SK-N-SH (cell line): ENCODE measurements at regions of chr7 and their contacts with region 1.

Region 1: DNA sequence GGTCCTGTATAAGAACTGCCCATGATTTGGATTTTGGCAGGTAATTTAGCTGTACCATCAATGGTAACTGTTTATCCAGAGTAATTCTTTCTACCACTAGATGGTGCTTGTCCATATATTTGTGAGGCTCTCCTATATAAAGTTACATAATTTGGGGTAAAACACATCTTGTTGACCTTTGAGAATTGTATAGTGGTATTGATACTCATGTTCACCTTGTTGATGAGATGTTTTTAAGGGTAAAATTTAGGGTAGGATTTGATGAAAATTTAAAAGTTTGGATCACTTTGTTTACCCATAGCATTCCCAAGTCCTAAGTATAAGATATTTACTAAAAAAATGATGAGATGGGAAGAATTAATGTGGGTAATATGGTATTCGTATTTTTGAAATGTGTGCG is 31.6 kb downstream of the ST7 start:
- DNase-seq: peak; percentile 52
- H3K4me3 ChIP-seq: no peak overlapping the region
- H3K27ac ChIP-seq: no peak overlapping the region
- H3K4me1 ChIP-seq: peaks cover 0 to 8% of the 10 kb centered on the region in 2 experiments; a peak in 1 of 4 replicates
- H3K27me3 ChIP-seq: no peaks in the 10 kb centered on the region
- CTCF ChIP-seq: peak; percentile 98
- EP300 ChIP-seq: no peak
- RAD21 ChIP-seq: peak; percentile 74

Region 2: GRCh38 chr7:116548506-116548905 is 436.4 kb before region 1 on chr7:
- CTCF ChIA-PET with region 1: no interaction called
- POLR2A ChIA-PET with region 1: no interaction called
- DNase-seq: no peak
- H3K4me3 ChIP-seq: no peak overlapping the region
- H3K27ac ChIP-seq: peak overlapping the region in 1 of 2 experiments; percentile 79; a peak in 1 of 4 replicates
- H3K4me1 ChIP-seq: peaks cover 0 to 82% of the 10 kb centered on the region in 2 experiments; a peak in 3 of 4 replicates
- H3K27me3 ChIP-seq: no peaks in the 10 kb centered on the region
- CTCF ChIP-seq: no peak
- EP300 ChIP-seq: no peak
- RAD21 ChIP-seq: no peak

Region 3: DNA sequence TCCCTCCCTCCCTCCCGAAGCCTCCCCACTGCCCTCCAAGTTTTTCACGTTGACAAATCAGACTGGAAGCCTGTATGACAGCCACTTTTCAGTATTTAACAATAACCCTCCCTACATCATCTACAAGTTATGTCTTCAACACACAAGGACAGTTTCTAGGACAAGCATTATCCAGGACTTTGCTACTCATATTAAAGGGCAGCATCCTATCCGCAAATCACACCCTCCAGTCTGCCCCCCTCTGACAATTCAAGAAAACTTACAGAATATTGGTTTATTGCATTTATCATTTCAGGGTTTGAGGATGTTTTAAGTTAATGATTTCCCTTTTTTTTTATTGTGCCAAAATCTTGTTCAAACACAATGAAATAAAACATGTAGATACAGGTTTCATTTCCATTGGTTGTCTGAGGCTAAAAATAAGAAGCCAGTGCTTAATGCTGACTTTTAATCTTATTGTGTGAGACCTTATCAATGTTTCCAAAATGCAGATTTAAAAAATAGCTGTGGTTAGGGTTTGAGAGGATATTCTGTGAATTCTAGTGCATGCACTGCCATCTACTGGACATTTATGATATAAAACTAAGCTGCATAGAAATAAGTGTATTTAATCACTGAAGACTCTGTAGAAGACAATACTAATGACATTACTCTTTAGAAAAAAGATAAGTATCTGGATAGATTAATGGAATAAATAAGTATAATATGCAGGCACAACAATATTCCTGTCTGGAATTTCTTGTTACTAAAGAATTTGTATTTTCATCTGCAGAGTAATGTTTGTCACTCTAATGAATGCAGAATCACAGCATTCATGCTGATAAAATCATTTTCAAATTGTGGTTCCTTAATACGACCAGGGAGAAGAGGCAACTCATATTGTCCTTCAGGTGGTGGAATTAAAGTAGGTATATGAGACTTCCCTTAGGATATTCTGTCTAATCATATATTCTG is 396.0 kb before region 1 on chr7:
- CTCF ChIA-PET with region 1: no interaction called
- POLR2A ChIA-PET with region 1: no interaction called
- DNase-seq: peak; percentile 21
- H3K4me3 ChIP-seq: no peak overlapping the region; a peak in 1 of 4 replicates
- H3K27ac ChIP-seq: peak overlapping the region; percentile 7 to 76; a peak in 3 of 4 replicates
- H3K4me1 ChIP-seq: peaks cover 5 to 19% of the 10 kb centered on the region in 2 experiments; a peak in 3 of 4 replicates
- H3K27me3 ChIP-seq: no peaks in the 10 kb centered on the region; the same call in 1 of the 2 replicates
- CTCF ChIP-seq: peak; percentile 93
- EP300 ChIP-seq: 0 out of 4 replicates have a peak, but pooled peaks of 1 of the 2 experiments have one; percentile 1
- RAD21 ChIP-seq: peak; percentile 88

Region 4: GRCh38 chr7:116929914-116930913 is 54.7 kb before region 1 on chr7:
- CTCF ChIA-PET with region 1: interaction called, 87 read pairs
- POLR2A ChIA-PET with region 1: no interaction called
- DNase-seq: peak; percentile 80
- H3K4me3 ChIP-seq: no peak overlapping the region
- H3K27ac ChIP-seq: no peak overlapping the region
- H3K4me1 ChIP-seq: no peaks in the 10 kb centered on the region
- H3K27me3 ChIP-seq: no peaks in the 10 kb centered on the region
- CTCF ChIP-seq: peak; percentile 100
- EP300 ChIP-seq: no peak
- RAD21 ChIP-seq: peak; percentile 96

Region 5: GRCh38 chr7:116970238-116970910 is 14.5 kb before region 1 on chr7:
- CTCF ChIA-PET with region 1: interaction called, 57 read pairs
- POLR2A ChIA-PET with region 1: no interaction called
- DNase-seq: no peak
- H3K4me3 ChIP-seq: no peak overlapping the region
- H3K27ac ChIP-seq: no peak overlapping the region
- H3K4me1 ChIP-seq: peaks cover 0 to 6% of the 10 kb centered on the region in 2 experiments; a peak in 2 of 4 replicates
- H3K27me3 ChIP-seq: no peaks in the 10 kb centered on the region
- CTCF ChIP-seq: no peak
- EP300 ChIP-seq: no peak
- RAD21 ChIP-seq: no peak

Region 6: DNA sequence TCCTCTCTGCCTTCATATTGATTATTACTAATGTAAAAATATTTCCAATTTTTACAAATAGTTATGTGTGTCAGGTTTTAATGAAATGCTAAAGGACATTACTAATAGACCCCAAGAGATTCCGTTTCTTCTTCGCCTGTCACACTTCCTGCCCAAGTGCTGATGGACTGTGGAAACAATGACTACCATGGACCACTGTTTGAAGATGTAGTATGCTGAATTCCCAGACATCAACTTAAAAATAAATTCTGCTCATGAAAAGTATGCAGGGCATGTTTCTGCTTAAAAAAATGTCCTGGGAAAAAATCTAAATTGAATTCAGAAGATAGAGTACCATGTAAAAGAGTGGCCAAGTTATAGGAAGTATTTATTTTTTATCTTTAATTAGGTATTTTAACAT is 20.5 kb after region 1 on chr7:
- CTCF ChIA-PET with region 1: interaction called, 58 read pairs
- POLR2A ChIA-PET with region 1: no interaction called
- DNase-seq: no peak
- H3K4me3 ChIP-seq: no peak overlapping the region
- H3K27ac ChIP-seq: peak overlapping the region in 1 of 2 experiments; percentile 60; a peak in 3 of 4 replicates
- H3K4me1 ChIP-seq: peaks cover 0 to 2% of the 10 kb centered on the region in 2 experiments; a peak in 2 of 4 replicates
- H3K27me3 ChIP-seq: no peaks in the 10 kb centered on the region
- CTCF ChIP-seq: no peak
- EP300 ChIP-seq: no peak
- RAD21 ChIP-seq: no peak

Region 7: DNA sequence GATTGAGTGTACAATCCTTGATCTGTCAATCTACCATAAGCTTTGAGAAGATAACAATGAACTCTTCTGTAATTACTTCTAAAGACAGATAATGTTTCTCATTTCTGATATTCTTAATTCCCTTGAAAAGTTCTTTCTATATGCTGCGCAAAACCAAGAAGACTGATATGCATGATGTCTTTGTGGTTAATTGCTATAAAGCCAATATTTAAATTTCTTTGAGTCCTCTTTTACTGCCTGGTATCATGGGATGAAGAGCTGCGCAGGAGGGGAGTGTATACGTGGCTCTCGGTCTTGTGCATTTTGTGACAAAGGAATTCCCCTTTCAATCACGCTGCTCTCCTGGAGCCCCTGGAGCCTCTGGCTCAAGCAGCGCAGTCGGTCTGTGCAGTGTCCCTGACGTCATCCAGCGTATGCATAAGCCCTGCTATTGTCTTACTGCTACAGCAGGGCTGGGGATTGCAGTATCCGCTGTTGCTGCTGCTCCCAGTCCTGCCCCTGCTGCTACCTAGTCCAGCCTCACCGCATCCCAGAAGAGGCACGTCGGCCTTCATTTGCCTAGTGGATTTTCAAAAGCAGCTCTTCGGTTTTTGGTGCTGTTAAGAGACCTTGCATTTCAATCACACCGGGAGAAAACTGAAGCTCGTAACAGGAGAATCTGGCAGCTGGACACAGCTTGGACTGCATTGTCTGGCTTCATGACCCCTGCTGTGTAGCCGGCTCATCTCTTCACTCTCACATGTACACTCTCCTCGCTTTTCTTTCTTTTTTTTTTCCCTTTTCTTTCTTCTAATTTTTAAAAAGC is 35.1 kb after region 1 on chr7:
- CTCF ChIA-PET with region 1: interaction called, 58 read pairs
- POLR2A ChIA-PET with region 1: no interaction called
- DNase-seq: peak; percentile 78
- H3K4me3 ChIP-seq: peak overlapping the region; percentile 48 to 53
- H3K27ac ChIP-seq: peak overlapping the region; percentile 84 to 86
- H3K4me1 ChIP-seq: peaks cover 10 to 39% of the 10 kb centered on the region in 2 experiments; a peak in 3 of 4 replicates
- H3K27me3 ChIP-seq: no peaks in the 10 kb centered on the region
- CTCF ChIP-seq: no peak
- EP300 ChIP-seq: peak in 1 of 2 experiments; percentile 45; a peak in 1 of 4 replicates
- RAD21 ChIP-seq: 0 out of 2 replicates have a peak, but pooled peaks have one; percentile 18

Region 8: DNA sequence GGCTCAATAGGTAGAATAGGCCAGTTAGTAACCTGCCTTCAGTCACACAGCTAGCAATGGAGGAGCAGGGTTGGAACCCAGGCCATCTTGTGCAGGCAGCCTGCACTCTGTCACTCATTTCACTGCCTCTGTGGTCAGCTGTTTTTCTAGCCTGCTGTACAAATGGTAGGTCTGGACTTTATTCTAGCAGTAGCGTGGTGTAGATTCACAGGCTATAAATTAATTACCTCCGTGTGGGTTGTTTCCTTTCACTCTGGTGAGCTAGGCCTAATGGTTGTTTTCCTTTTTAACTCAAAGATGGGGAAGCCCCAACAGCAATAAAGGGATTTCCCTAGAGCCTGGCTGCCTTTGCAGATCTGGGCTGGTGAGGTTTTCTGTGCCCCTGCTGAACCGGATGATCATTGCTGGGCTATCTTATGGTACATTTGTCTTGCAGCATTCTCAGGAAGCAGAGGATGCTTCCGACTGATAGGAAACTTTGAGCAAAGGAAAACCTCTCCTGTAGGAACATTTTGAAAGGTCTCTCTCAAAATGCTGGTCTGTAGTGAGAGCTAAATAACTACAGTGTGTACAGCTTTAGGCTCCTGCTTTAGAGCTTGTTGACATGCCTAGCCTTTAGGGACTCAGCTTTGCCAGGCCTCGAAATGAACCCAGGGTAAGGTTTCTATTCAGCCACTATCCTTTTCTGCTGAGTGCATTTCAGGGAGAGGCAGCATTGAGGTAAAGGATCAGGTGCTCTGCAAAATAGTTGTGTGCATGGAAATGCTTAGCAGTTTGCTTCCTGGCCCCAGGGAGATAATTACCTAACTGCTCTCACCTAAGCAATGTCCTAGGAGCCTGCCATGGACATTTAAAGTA is 125.8 kb after region 1 on chr7:
- CTCF ChIA-PET with region 1: interaction called, 668 read pairs
- POLR2A ChIA-PET with region 1: no interaction called
- DNase-seq: peak; percentile 80
- H3K4me3 ChIP-seq: no peak overlapping the region; a peak in 1 of 4 replicates
- H3K27ac ChIP-seq: peak overlapping the region in 1 of 2 experiments; percentile 94; a peak in 3 of 4 replicates
- H3K4me1 ChIP-seq: peaks cover 5 to 24% of the 10 kb centered on the region in 2 experiments; a peak in 3 of 4 replicates
- H3K27me3 ChIP-seq: no peaks in the 10 kb centered on the region
- CTCF ChIP-seq: no peak
- EP300 ChIP-seq: peak in 1 of 2 experiments; percentile 91; a peak in 2 of 4 replicates
- RAD21 ChIP-seq: peak; percentile 27; the same call in 1 of the 2 replicates

Region 9: DNA sequence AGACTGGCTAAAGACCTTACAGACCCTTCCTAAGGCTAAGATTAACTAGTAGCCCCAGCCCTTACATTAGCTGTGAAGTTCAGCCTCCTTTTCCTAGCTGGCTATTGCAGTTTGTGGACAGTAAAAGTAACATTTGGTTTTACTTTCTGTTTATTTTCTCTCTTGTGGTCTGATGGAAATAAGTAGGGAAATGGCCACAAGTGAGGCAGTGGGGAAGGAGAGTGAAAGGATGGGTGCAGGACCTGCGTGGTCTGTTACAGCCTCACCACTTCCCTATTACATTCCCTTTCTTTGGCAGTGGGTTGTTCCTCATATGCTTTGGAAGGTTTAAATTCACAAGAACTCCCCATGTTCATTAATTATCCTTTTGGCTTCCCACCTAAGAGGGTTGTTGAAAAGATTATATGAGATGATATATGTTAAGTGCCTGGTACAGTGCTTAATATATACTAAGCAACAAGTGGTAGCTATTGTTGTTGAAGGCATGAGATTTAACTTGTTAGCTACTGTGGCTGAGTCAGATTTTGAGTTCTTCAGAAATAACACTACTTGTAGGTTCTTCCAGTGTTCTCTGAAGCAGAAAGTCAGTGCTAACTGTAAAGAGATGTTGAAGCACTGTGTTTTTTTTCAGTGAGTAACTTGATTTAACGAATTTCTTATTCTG is 150.1 kb after region 1 on chr7:
- CTCF ChIA-PET with region 1: interaction called, 32 read pairs
- POLR2A ChIA-PET with region 1: no interaction called
- DNase-seq: no peak
- H3K4me3 ChIP-seq: no peak overlapping the region
- H3K27ac ChIP-seq: peak overlapping the region in 1 of 2 experiments; percentile 100; a peak in 1 of 4 replicates
- H3K4me1 ChIP-seq: peaks cover 17 to 21% of the 10 kb centered on the region in 2 experiments
- H3K27me3 ChIP-seq: no peaks in the 10 kb centered on the region
- CTCF ChIP-seq: no peak
- EP300 ChIP-seq: no peak
- RAD21 ChIP-seq: no peak